ENCODE measurements at regions of chr3 and their contacts with region 1.

Region 1: DNA sequence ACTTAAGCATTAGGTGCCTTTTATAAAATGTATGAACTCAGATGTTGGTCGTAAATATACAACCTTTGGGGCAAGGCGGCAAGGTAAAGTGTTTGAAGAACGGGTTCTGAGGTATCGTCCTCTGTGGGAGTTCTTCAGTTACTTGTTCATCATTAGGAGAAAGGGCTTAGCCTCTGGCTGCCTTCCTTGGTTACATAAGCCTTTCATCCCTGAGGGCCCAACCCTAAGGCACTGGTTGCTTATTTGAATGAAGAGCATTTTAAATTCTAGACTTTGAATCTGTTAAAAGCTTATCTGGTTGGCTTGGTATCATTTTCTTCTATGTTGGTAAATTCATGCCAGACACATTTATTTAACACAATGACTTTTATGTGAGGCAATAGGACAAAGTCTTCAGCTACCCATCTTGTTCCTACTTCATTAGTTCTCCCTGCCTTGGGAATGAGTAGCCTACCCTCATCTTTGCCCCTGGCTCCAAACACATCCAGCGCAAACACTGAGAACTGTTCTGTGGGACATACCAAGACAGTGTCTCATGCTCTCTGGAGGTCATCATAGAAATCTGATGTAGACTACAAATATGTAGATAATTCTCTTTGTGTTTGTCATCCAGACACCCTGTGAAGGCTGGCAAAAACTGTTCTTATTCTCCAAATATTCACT is 12.4 kb upstream of the CCDC80 start:
- DNase-seq: peak; percentile 92 to 97
- ATAC-seq: peak; percentile 96 to 97
- H3K4me3 ChIP-seq: no peak overlapping the region
- H3K27ac ChIP-seq: peak overlapping the region; percentile 92 to 99
- H3K4me1 ChIP-seq: peaks cover 78% of the 10 kb centered on the region
- CTCF ChIP-seq: no peak
- EP300 ChIP-seq: peak; percentile 89 to 93
- POLR2A ChIP-seq: no peak
- RAD21 ChIP-seq: peak; percentile 30 to 52; a peak in 4 of 5 replicates

Region 2: GRCh38 chr3:112676659-112677234 is 23.4 kb after region 1 on chr3:
- CTCF ChIA-PET with region 1: interaction called, 9 read pairs
- POLR2A ChIA-PET with region 1: interaction called, 12 read pairs
- DNase-seq: peak; percentile 74 to 93
- ATAC-seq: peak; percentile 98
- H3K4me3 ChIP-seq: no peak overlapping the region
- H3K27ac ChIP-seq: peak overlapping the region; percentile 90
- H3K4me1 ChIP-seq: peaks cover 64% of the 10 kb centered on the region
- CTCF ChIP-seq: no peak
- EP300 ChIP-seq: peak; percentile 21 to 68; a peak in 1 of 5 replicates
- POLR2A ChIP-seq: no peak
- RAD21 ChIP-seq: peak; percentile 1 to 35; a peak in 2 of 5 replicates

Region 3: DNA sequence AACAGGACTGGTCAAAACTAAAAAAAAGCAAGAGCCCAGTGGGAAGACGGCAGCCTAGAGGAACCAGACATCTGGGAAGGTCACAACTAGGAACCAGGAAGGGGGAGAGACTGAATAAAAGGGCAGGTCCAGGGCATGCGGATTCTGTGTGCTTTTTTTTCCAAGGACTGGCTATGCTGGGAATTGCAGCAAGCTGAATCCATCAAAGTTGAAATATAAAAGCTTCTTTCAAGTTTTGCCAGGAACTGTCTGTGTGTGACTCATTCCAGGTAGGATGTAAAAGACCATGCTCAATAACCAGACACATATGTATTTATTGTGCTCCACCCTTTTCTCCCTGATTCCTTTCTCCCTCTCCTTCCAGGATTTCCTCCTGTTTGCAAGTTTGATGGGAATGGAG is 35.5 kb after region 1 on chr3:
- CTCF ChIA-PET with region 1: interaction called, 10 read pairs
- POLR2A ChIA-PET with region 1: interaction called, 5 read pairs
- DNase-seq: peak in 1 of 2 experiments; percentile 83
- ATAC-seq: peak; percentile 83
- H3K4me3 ChIP-seq: no peak overlapping the region
- H3K27ac ChIP-seq: peak overlapping the region; percentile 87 to 88
- H3K4me1 ChIP-seq: peaks cover 62% of the 10 kb centered on the region
- CTCF ChIP-seq: no peak
- EP300 ChIP-seq: peak; percentile 70 to 77; a peak in 4 of 5 replicates
- POLR2A ChIP-seq: no peak
- RAD21 ChIP-seq: peak in 1 of 2 experiments; percentile 46; a peak in 1 of 5 replicates

Region 4: DNA sequence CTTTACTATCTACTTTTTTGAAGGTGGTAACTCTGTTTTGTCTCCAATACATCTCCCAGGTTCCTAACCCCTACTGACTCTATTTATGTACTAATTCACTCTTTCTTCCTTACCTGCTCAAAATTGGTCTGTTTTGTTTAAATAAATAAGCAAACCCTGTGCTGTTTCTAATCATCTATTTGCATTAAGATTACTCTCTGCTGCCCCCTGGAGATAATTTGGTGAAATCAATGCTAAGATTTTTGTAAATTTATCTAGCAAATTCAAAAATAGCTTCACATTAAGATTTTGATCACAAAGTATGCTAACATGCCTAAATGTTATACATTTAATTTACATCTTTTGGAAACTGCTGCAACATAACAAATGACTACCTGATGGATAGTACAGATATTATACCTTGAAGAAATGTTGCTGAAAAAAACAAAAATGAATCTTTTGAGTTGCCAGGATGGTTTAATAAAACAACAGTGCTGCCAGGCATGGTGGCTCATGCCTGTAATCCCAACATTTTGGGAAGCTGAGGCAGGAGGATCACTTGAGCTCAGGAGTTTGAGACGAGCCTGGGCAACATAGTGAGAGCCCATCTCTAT is 326.0 kb after region 1 on chr3:
- CTCF ChIA-PET with region 1: interaction called, 15 read pairs
- POLR2A ChIA-PET with region 1: no interaction called
- DNase-seq: peak; percentile 21 to 42
- ATAC-seq: no peak
- H3K4me3 ChIP-seq: no peak overlapping the region
- H3K27ac ChIP-seq: peak overlapping the region; percentile 2 to 25; a peak in 3 of 6 replicates
- H3K4me1 ChIP-seq: peaks cover 8% of the 10 kb centered on the region; the same call in 1 of the 3 replicates
- CTCF ChIP-seq: peak; percentile 83
- EP300 ChIP-seq: no peak
- POLR2A ChIP-seq: no peak
- RAD21 ChIP-seq: peak; percentile 74 to 83

Measured in A549 (cell line).